ENCODE measurements at regions of chr7 and their contacts with region 1.

Region 1: GRCh38 chr7:116984917-116985316 is 31.6 kb downstream of the ST7 start:
- DNase-seq: no peak
- H3K4me3 ChIP-seq: no peak overlapping the region
- H3K27ac ChIP-seq: no peak overlapping the region
- H3K4me1 ChIP-seq: no peaks in the 10 kb centered on the region
- H3K27me3 ChIP-seq: no peaks in the 10 kb centered on the region
- CTCF ChIP-seq: peak; percentile 38 to 69 (median 59)

Region 2: DNA sequence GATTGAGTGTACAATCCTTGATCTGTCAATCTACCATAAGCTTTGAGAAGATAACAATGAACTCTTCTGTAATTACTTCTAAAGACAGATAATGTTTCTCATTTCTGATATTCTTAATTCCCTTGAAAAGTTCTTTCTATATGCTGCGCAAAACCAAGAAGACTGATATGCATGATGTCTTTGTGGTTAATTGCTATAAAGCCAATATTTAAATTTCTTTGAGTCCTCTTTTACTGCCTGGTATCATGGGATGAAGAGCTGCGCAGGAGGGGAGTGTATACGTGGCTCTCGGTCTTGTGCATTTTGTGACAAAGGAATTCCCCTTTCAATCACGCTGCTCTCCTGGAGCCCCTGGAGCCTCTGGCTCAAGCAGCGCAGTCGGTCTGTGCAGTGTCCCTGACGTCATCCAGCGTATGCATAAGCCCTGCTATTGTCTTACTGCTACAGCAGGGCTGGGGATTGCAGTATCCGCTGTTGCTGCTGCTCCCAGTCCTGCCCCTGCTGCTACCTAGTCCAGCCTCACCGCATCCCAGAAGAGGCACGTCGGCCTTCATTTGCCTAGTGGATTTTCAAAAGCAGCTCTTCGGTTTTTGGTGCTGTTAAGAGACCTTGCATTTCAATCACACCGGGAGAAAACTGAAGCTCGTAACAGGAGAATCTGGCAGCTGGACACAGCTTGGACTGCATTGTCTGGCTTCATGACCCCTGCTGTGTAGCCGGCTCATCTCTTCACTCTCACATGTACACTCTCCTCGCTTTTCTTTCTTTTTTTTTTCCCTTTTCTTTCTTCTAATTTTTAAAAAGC is 35.1 kb after region 1 on chr7:
- intact Hi-C with region 1: loop called (anchors 5 kb)
- DNase-seq: peak; percentile 19 to 79
- H3K4me3 ChIP-seq: peak overlapping the region; percentile 51 to 63
- H3K27ac ChIP-seq: peak overlapping the region; percentile 63 to 69
- H3K4me1 ChIP-seq: peaks cover 3 to 24% of the 10 kb centered on the region in 2 donors
- H3K27me3 ChIP-seq: no peaks in the 10 kb centered on the region
- CTCF ChIP-seq: no peak

Region 3: DNA sequence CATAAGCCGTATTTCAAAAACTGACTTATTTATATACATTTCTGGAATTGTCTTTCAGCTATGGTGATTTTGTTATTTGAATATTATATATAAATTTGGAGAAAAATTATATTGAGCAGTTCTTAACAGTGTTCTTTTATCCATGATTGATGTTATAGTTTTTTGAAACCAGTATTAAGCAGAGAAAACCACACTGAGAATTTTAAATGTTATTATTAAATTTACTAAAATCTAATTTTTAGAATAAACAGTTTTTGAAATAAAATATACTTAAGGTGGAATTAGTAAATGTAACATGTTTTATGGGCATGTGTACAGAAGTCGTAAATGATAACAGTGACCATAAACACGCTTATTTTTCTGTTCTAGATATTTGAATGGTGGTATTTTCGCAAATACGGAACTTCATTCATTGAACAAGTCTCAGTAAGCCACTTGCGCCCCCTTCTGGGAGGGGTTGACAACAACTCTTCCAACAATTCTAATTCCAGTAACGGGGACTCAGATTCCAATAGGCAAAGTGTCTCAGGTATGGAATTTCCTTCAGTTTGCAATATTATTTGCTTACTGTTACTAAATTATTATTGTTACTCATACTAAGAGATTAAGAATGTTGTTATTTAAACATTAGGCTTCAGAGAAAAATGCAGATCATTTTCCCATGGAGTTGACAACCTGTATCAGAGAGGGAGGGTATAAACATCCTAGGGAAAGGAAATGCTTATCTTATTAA is 134.4 kb after region 1 on chr7:
- intact Hi-C with region 1: loop called (anchors 1 kb)
- DNase-seq: peak in 1 of 2 donors; percentile 91
- H3K4me3 ChIP-seq: no peak overlapping the region
- H3K27ac ChIP-seq: no peak overlapping the region
- H3K4me1 ChIP-seq: peaks cover 2 to 5% of the 10 kb centered on the region in 2 donors
- H3K27me3 ChIP-seq: no peaks in the 10 kb centered on the region
- CTCF ChIP-seq: peak; percentile 75 to 84 (median 83)